Activated CD8-positive, alpha-beta T cell treated with anti-CD3 and anti-CD28 coated beads for 36 hours (primary cell): ENCODE measurements at regions of chr5 and their contacts with region 1.

Region 1: DNA sequence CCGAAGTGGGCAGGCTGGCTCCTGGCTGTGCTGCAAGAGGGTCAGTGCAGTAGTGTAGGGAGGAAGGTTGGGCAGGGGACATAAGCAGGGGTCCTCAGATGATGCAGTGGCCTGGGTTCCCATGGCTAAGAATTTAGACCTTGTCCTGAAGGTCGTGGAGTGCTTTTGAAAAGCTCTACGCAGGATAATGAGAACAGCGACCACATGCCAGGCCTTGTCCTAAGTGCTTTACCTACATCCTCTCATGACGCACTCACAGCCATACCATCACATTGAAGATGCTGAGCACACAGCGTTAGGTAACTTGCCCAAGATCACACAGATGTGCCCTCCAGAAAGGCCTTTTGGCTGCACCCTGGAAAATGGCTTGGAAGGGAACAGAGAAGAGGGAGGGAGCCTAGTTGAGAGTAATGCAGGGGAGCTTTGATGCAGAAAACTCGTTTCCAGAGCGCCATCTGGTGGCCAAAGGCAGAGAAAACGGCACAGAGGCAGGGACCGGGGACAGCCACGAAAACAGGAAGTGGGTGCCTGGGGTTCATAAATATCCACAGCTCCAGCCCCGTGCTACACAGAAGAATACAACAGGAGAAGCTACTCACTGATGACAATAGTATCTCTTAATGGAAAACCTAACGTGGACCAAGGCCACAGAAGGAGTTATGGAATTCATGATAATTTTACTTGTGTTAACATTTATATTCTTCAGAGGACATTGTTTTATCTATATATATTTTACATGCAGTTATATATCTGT is 2.6 kb upstream of the PCDH12 start:
- DNase-seq: peak; percentile 94
- ATAC-seq: peak; percentile 88
- H3K4me3 Mint-ChIP-seq: peak overlapping the region; percentile 44
- H3K27ac Mint-ChIP-seq: peak overlapping the region; percentile 80
- H3K4me1 Mint-ChIP-seq: peaks cover 45% of the 10 kb centered on the region
- H3K27me3 Mint-ChIP-seq: no peaks in the 10 kb centered on the region
- CTCF ChIP-seq: peak; percentile 62

Region 2: GRCh38 chr5:141681695-141682641 is 278.7 kb before region 1 on chr5 and contains the start of gene ARAP3:
- CTCF ChIA-PET with region 1: interaction called, 19 read pairs
- POLR2A ChIA-PET with region 1: interaction called, 4 read pairs
- intact Hi-C with region 1: no loop called
- DNase-seq: peak; percentile 54
- ATAC-seq: peak; percentile 73
- H3K4me3 Mint-ChIP-seq: peak within 1 kb of the TSS; percentile 72
- H3K27ac Mint-ChIP-seq: peak within 1 kb of the TSS; percentile 68
- H3K4me1 Mint-ChIP-seq: peaks cover 24% of the 10 kb centered on the region
- H3K27me3 Mint-ChIP-seq: no peaks in the 10 kb centered on the region
- CTCF ChIP-seq: no peak
- total RNA-seq, gene ARAP3: 5.9 to 7.2 TPM

Region 3: DNA sequence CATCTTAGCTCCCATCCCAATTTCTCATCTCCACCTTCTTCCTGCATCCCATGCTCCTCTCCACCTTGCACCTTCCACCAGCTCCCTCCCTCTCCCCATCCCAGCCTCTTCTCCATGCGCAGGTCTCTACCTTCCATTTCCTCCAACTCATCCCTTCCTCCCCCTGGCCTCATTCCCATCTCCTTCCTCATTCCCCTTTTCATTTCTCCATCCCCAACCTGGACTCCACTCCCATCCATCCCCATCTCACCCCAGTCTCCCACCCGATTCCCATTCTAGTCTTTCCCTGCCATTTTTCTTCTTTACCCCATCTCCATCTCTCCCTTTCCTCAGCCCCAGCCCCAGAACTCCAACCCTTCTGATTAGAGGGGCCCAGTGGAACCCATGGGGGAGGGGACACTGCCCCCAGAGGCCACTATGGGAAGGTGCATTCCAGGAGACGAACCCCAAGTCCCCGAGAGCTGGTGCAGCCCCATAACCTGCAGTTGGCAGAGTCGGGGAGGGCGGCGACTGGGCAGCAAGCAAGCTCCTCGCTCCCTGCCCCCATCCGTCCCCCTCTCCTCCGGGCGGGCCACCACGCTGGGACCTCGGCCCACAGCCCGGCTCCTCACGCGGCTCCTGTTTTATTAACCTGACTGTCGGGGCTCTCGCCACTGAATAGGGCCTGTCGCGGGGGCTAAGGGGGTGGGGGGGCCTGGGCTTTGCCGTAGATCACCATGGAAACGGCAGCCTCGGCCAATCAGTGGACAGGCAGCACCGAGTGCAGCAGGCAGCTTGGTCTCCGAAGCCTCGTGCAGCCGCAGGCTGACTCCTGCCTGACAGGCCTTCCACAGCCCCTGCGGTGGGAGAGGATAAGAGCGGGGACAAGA is 149.1 kb before region 1 on chr5:
- CTCF ChIA-PET with region 1: interaction called, 20 read pairs
- POLR2A ChIA-PET with region 1: no interaction called
- intact Hi-C with region 1: no loop called
- DNase-seq: peak; percentile 49
- ATAC-seq: peak; percentile 88
- H3K4me3 Mint-ChIP-seq: no peak overlapping the region
- H3K27ac Mint-ChIP-seq: no peak overlapping the region
- H3K4me1 Mint-ChIP-seq: no peaks in the 10 kb centered on the region
- H3K27me3 Mint-ChIP-seq: peaks cover 38% of the 10 kb centered on the region
- CTCF ChIP-seq: peak; percentile 77

Region 4: DNA sequence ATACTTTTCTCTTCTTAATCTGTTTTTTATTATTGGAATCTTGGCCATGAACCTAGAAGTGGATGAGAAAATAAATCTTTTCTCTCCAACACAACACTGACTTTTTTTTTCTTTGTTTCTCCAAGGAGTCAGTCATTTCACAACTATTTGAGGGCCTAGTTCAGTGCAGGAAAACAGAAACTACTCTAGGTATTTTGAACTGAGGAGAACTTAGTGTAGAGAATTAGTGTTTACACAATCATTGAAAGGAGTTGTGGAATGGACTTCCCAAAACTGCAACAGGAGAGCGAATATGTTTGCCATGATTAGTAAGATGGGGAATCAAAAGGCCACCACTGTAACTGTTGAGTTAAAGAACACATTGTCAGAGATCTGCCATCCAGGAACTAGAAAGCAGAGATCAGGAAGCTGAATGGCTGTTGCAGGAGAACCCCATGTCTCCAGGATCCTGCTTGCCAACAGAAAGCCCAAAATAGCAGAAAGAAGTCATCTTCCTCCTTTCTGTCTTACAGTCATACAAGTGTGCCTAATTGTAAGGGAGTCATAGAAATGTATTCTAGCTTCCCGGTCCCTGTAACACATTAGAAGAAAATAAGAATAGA is 62.1 kb before region 1 on chr5:
- CTCF ChIA-PET with region 1: interaction called, 12 read pairs
- POLR2A ChIA-PET with region 1: no interaction called
- intact Hi-C with region 1: no loop called
- DNase-seq: no peak
- ATAC-seq: no peak
- H3K4me3 Mint-ChIP-seq: no peak overlapping the region
- H3K27ac Mint-ChIP-seq: no peak overlapping the region
- H3K4me1 Mint-ChIP-seq: no peaks in the 10 kb centered on the region
- H3K27me3 Mint-ChIP-seq: peaks cover 6% of the 10 kb centered on the region
- CTCF ChIP-seq: no peak

Region 5: DNA sequence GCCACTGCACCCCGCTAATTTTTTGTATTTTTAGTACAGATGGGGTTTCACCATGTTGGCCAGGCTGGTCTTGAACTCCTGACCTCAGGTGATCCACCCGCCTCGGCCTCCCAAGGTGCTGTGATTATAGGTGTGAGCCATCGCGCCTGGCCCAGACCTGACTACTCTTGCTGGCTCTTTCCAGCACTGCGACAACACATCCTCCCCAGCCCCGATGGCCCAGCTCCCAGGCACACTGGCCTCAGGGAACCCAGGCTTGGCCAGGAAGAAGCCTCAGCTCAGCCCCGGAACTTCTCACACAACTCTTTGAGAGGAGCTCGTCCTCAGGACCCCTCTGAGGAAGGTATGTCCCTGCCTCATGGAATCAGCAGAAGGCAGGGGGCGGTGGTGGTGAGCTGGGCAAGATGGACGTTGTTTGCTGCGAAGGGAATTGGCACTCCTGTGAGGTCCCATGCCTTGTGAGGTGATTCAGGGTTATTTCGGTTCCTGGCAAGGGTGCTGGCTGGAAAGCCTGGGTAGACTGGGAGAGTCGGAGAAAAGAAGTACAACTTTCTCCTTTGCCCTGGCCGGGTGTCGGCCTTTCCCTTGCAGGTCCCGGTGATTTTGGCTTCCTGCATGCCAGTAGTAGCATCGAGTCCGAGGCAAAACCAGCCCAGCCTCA is 31.1 kb before region 1 on chr5:
- CTCF ChIA-PET with region 1: interaction called, 42 read pairs
- POLR2A ChIA-PET with region 1: no interaction called
- intact Hi-C with region 1: no loop called
- DNase-seq: no peak
- ATAC-seq: no peak
- H3K4me3 Mint-ChIP-seq: no peak overlapping the region
- H3K27ac Mint-ChIP-seq: no peak overlapping the region
- H3K4me1 Mint-ChIP-seq: peaks cover 14% of the 10 kb centered on the region
- H3K27me3 Mint-ChIP-seq: no peaks in the 10 kb centered on the region
- CTCF ChIP-seq: no peak

Region 6: DNA sequence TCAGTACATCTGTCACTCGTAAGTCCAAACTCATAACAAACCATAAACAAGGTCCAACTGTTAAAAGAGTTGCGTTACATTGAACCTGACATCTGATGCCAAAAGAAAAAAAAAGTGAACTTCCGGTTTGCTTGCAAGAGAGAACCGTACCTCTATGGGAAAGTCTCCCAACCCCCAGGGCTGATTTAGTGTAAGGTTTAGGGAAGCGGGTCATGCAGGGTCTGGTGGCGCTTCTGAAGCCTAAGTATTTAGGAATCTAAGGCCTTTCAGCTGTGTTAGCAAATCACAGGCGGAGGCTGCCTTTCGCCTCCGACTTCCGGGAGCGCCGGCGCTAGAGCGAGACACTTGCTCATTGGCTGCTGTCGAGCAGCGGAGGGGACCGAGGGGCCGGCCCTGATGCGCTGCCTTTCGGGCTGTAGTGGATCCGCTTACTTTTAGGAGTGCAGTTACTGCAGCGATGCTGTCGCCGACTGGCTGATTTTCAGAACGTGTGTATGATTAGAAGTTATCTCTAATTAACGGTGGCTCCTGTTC is 64.2 kb after region 1 on chr5:
- CTCF ChIA-PET with region 1: no interaction called
- POLR2A ChIA-PET with region 1: no interaction called
- intact Hi-C with region 1: no loop called
- DNase-seq: peak; percentile 92
- ATAC-seq: peak; percentile 100
- H3K4me3 Mint-ChIP-seq: peak overlapping the region; percentile 96
- H3K27ac Mint-ChIP-seq: peak overlapping the region; percentile 96
- H3K4me1 Mint-ChIP-seq: peaks cover 19% of the 10 kb centered on the region
- H3K27me3 Mint-ChIP-seq: no peaks in the 10 kb centered on the region
- CTCF ChIP-seq: no peak

Region 7: DNA sequence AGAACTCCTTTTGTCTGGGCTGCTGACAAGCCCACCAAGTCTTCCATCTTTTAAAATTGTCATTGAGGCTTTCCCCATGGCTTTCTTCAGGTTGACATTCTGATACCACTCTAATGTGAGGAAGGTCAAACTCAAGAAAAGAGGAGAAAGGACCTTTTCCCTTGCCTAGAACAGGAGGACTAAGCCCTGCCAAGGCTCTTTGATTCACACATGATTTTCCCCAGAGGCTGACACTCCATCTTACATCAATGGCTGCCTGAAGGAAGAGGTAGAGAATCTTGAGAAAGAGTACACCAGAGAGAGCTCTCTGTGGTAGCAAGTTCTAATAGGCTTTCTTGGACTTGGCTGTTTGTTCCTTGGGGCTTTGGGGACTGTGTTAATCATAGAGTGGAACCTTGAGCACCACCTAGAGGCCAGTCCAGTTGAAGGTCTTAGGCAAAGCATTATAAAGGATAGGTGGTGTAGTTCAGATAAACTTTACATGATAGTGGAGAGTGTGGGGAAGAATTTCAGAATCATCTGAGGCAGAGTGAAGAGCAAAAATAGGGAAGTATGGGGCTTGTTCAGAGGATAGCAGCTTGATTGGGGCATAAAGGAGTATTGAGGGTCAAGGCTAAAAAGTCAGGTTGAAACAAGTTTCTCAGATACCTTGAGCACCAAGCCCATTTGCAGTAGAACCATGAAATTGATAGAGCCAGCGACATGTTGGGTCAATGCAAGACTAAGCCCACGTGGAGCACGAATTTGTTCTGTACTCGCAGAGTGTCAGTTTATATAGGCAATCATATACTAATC is 184.7 kb after region 1 on chr5:
- CTCF ChIA-PET with region 1: interaction called, 22 read pairs
- POLR2A ChIA-PET with region 1: no interaction called
- intact Hi-C with region 1: no loop called
- DNase-seq: peak; percentile 84
- ATAC-seq: peak; percentile 90
- H3K4me3 Mint-ChIP-seq: no peak overlapping the region
- H3K27ac Mint-ChIP-seq: no peak overlapping the region
- H3K4me1 Mint-ChIP-seq: peaks cover 5% of the 10 kb centered on the region
- H3K27me3 Mint-ChIP-seq: no peaks in the 10 kb centered on the region
- CTCF ChIP-seq: peak; percentile 65